ENCODE measurements at regions of chr16 and their contacts with region 1.

Region 1: GRCh38 chr16:57863434-57864160 is 61.3 kb upstream of the KIFC3 start:
- H3K4me3 ChIP-seq: no peak overlapping the region
- H3K27ac ChIP-seq: no peak overlapping the region
- H3K4me1 ChIP-seq: peaks cover 19% of the 10 kb centered on the region
- CTCF ChIP-seq: peak; percentile 48; the same call in 1 of the 2 replicates

Region 2: DNA sequence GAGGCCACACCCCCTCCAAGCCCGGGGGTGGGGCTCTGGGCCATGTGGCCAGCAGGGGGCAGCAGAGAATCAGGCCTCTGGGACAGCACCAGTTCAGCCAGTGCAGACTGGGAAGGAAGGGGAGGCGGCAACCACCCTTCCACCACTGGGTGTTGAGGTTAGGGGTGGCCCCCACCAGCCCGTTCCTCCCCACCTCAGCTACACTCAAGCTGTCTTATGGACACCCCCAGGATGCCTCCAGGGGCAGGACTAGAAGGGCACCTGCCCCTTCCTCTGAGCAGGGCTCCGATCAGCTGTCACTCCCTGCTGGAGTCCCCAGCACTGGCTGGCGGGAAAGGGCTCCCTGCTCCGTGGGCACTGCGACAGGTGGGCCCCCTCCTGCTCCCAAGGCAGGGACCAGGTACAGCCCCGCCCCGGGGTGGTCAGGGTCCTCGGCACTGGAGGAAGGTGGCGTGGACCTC is 106.2 kb before region 1 on chr16:
- CTCF ChIA-PET with region 1: interaction called, 20 read pairs
- POLR2A ChIA-PET with region 1: interaction called, 6 read pairs
- H3K4me3 ChIP-seq: no peak overlapping the region
- H3K27ac ChIP-seq: no peak overlapping the region
- H3K4me1 ChIP-seq: no peaks in the 10 kb centered on the region
- CTCF ChIP-seq: peak; percentile 91

Region 3: DNA sequence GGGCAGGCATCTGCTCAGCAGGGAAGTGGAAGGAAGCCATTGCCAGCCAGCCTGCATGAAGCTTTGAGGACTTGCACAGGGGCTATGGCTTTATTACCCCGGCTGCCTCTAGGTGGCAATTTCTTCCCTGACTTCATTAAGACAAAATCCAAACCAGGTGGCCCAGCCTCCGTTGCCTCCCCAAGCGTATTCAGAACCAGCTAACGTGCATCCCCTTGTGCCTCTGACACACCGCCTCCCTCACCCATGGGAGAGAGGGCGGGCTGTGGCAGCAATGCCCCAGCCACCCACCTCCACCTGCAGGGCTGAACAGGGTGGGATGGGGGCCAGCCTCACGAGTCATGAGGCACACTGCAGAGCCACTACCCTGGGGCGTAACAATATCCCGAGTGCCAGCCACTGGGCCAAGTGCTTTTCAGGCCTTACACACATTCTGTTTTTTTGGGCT is 68.1 kb before region 1 on chr16:
- CTCF ChIA-PET with region 1: interaction called, 25 read pairs
- POLR2A ChIA-PET with region 1: interaction called, 3 read pairs
- H3K4me3 ChIP-seq: no peak overlapping the region
- H3K27ac ChIP-seq: no peak overlapping the region
- H3K4me1 ChIP-seq: no peaks in the 10 kb centered on the region
- CTCF ChIP-seq: peak; percentile 40; the same call in 1 of the 2 replicates

Region 4: GRCh38 chr16:57802341-57803133 is 61.1 kb before region 1 on chr16 and contains the start of gene KIFC3:
- CTCF ChIA-PET with region 1: interaction called, 13 read pairs
- POLR2A ChIA-PET with region 1: interaction called, 3 read pairs
- H3K4me3 ChIP-seq: peak within 1 kb of the TSS; percentile 49
- H3K27ac ChIP-seq: peak within 1 kb of the TSS; percentile 50; the same call in 1 of the 2 replicates
- H3K4me1 ChIP-seq: peaks cover 8% of the 10 kb centered on the region
- CTCF ChIP-seq: no peak

Region 5: DNA sequence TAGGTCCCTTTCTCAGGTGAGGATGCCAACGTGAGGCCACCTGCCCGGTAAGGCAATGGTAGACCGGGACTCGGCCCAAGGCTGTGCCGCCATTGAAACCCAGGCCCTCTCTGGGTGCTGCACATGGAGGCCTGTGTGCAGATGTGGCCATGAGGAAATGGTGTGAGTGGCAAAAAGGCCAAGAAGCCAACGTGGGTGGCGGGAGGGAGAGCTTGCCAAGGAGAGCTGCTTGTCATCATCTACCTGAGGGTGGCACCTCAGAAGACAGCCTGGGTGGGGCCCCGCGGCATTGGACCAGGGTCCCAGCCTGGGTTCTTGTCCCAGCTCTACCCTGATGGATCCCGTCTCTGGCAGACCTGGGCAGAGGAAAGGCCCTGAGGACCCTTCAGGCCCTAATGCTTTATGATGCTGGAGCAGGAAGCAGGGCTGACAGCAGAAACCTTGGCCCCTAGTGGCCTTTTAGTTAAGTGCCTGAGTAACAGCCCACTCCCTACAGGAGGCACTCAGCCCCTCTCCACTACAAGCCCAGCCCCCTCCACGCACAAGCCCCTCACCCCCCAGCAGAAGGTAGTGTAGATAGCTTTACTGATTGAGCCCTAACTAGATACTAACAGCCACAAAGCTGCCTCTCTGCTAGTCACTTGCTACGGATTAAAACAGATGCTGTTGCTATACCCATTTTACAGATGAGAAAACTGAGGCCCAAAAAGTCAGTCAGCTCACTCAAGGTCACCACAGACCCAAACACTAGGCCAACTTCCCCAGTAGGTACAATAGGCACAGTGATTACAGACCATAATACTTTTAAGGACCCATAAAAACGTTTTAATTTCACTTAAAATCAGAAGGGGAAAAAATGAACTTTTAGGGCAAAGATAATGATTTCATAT is 35.1 kb before region 1 on chr16:
- CTCF ChIA-PET with region 1: no interaction called
- POLR2A ChIA-PET with region 1: no interaction called
- H3K4me3 ChIP-seq: no peak overlapping the region
- H3K27ac ChIP-seq: no peak overlapping the region
- H3K4me1 ChIP-seq: no peaks in the 10 kb centered on the region
- CTCF ChIP-seq: no peak

Region 6: GRCh38 chr16:57882792-57883191 is 19.2 kb after region 1 on chr16:
- CTCF ChIA-PET with region 1: interaction called, 10 read pairs
- POLR2A ChIA-PET with region 1: no interaction called
- H3K4me3 ChIP-seq: no peak overlapping the region
- H3K27ac ChIP-seq: no peak overlapping the region
- H3K4me1 ChIP-seq: no peaks in the 10 kb centered on the region
- CTCF ChIP-seq: no peak

Region 7: DNA sequence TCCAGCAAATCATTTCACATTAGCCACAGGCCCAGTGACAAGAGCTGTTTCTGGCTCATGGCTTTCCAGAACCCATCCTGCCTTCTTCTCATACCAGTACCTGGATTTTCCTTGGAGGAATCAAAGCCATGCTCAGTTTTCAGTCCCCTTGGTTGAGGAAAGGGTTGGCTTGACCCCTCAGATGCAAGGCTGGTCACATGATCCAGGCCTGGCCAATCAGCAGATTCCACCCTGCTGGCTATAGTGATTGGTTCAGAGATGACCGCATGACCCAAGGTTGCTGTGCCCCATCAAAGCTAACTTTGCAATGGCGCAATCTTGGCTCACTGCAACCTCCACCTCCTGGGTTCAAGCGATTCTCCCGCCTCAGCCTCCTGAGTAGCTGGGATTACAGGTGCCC is 207.0 kb after region 1 on chr16:
- CTCF ChIA-PET with region 1: interaction called, 3 read pairs
- POLR2A ChIA-PET with region 1: interaction called, 10 read pairs
- H3K4me3 ChIP-seq: no peak overlapping the region
- H3K27ac ChIP-seq: no peak overlapping the region
- H3K4me1 ChIP-seq: no peaks in the 10 kb centered on the region
- CTCF ChIP-seq: no peak